ENCODE measurements at regions of chr4 and their contacts with region 1.

Region 1: GRCh38 chr4:169619959-169620879 is at the start of gene CLCN3:
- DNase-seq: peak; percentile 97
- H3K4me3 ChIP-seq: peak within 1 kb of the TSS; percentile 62
- H3K4me3 Mint-ChIP-seq: peak within 1 kb of the TSS; percentile 84
- H3K27ac Mint-ChIP-seq: peak within 1 kb of the TSS; percentile 95
- H3K4me1 ChIP-seq: peaks cover 19% of the 10 kb centered on the region
- H3K4me1 Mint-ChIP-seq: no peaks in the 10 kb centered on the region
- H3K27me3 ChIP-seq: no peaks in the 10 kb centered on the region
- H3K27me3 Mint-ChIP-seq: no peaks in the 10 kb centered on the region
- CTCF ChIP-seq: no peak
- total RNA-seq, gene CLCN3: 36.4 and 42.1 TPM in 2 replicates

Region 2: GRCh38 chr4:169659716-169660670 is 39.8 kb after region 1 on chr4:
- CTCF ChIA-PET with region 1: interaction called, 4 read pairs
- POLR2A ChIA-PET with region 1: interaction called, 19 read pairs
- intact Hi-C with region 1: loop called (anchors 1 kb)
- DNase-seq: peak; percentile 90
- H3K4me3 ChIP-seq: peak overlapping the region; percentile 42
- H3K4me3 Mint-ChIP-seq: peak overlapping the region; percentile 84
- H3K27ac Mint-ChIP-seq: peak overlapping the region; percentile 98
- H3K4me1 ChIP-seq: peaks cover 25% of the 10 kb centered on the region
- H3K4me1 Mint-ChIP-seq: peaks cover 7% of the 10 kb centered on the region
- H3K27me3 ChIP-seq: no peaks in the 10 kb centered on the region
- H3K27me3 Mint-ChIP-seq: no peaks in the 10 kb centered on the region
- CTCF ChIP-seq: no peak

Region 3: DNA sequence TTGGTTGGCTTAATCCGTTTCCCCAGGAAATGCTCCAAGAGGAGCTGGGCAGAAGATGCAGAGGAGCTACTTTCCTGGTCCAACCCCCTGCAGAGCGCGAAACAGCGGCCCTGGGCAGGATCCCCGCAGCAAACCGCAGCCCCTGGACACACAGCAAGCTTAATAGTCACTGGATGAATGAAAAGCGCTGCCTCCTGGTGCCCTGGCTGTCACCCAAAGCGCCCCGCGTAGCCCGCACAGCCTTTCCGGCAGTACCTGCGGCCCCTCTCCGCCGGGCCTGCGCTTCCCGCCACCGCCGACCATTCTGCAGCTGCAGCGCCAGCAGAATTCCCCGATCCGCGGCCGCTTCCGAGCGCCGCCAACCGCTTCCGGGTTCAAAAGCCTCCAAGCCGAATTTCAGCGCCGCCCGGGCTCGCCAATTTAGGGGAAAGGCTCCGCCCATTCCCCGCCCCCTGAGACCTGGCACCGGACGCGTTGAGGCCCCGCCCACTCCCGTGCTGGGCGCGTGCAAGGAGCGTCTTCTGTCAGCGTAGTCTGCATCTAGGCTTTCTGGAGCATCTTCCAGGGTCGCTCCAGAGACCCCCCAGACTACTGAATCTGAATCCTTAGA is 137.5 kb after region 1 on chr4 and contains the start of gene HPF1:
- CTCF ChIA-PET with region 1: no interaction called
- POLR2A ChIA-PET with region 1: no interaction called
- intact Hi-C with region 1: no loop called
- DNase-seq: peak; percentile 92
- H3K4me3 ChIP-seq: peak within 1 kb of the TSS; percentile 81
- H3K4me3 Mint-ChIP-seq: peak within 1 kb of the TSS; percentile 77
- H3K27ac Mint-ChIP-seq: peak within 1 kb of the TSS; percentile 5
- H3K4me1 ChIP-seq: 0 out of 2 replicates have a peak, but pooled peaks cover 5% of the 10 kb centered on the region
- H3K4me1 Mint-ChIP-seq: peaks cover 12% of the 10 kb centered on the region
- H3K27me3 ChIP-seq: no peaks in the 10 kb centered on the region
- H3K27me3 Mint-ChIP-seq: no peaks in the 10 kb centered on the region
- CTCF ChIP-seq: no peak
- total RNA-seq, gene HPF1: 9.7 and 14.9 TPM in 2 replicates

Measured in Caco-2 (cell line).